Endothelial cell of umbilical vein (primary cell): ENCODE measurements at regions of chr5 and their contacts with region 1.

Region 1: GRCh38 chr5:136062366-136063274 is 33.8 kb downstream of the TGFBI start:
- DNase-seq: peak; percentile 40
- H3K4me3 ChIP-seq: no peak overlapping the region
- H3K27ac ChIP-seq: no peak overlapping the region
- H3K4me1 ChIP-seq: peaks cover 15% of the 10 kb centered on the region
- H3K27me3 ChIP-seq: no peaks in the 10 kb centered on the region
- CTCF ChIP-seq: peak; percentile 42 to 54
- POLR2A ChIP-seq: no peak

Region 2: DNA sequence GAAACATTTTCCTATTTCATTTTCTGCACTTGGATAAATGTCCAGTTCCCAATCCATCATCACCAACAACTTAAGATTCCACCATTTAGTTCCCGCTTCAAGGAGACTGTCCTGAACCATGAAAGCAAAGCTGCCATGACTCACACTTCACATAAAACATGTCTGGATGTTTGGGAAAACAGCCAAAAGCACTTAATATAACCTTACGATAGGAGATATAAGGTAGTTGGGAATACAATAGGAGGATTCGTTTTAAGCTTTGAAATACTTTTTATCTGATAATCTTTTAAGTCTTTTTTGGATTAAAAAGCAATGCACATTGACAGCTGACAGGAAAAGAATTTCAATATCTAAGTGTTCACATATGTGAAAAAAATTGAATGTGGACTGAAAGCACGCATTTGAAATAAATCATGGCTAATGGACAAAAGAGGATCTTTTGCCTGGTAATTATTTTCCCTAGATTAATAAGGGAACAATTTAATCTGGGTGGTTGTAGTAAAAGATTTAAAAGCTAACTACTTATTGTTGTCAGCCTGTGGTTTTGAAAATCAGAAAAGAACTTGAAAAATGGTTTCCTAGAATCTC is 51.1 kb before region 1 on chr5:
- CTCF ChIA-PET with region 1: no interaction called
- POLR2A ChIA-PET with region 1: no interaction called
- dilution Hi-C with region 1: no loop called
- intact Hi-C with region 1: loop called (anchors 2 kb)
- DNase-seq: peak; percentile 89
- H3K4me3 ChIP-seq: no peak overlapping the region
- H3K27ac ChIP-seq: peak overlapping the region; percentile 65
- H3K4me1 ChIP-seq: peaks cover 19% of the 10 kb centered on the region
- H3K27me3 ChIP-seq: no peaks in the 10 kb centered on the region
- CTCF ChIP-seq: no peak
- POLR2A ChIP-seq: no peak